ENCODE measurements at regions of chr1 and their contacts with region 1.

Region 1: DNA sequence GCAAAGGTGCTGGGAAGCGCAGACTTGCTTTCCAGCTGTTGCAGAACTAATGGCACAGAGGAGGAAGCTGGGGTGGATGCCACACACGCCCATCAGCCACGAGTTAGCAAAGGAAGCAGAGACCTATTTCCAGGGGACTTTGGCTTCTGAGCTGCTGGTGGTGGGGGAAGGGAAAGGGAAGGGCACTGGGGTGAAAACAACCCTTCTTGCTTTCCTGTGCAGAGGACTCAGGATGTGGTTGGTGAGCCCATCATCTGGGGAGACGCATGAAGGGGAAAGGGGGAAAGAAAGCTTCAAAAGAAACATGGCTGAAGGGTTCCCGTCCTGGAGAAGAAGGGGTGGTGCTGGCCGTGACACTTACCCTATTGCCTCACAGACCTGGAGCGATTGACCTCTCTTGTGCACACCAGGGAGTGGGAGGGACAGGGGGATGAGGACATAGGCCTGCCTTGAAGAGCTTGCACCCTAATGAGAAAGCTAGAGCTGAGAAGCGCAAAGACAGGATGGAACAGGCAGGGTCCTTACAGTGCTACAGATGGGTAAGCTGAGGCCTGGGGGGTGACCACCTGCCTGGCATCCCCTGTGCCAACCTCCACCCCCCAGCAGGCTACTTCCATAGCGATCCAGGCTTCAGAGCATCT is 140.8 kb upstream of the RAB4A start:
- DNase-seq: peak; percentile 88
- ATAC-seq: peak; percentile 80
- H3K4me3 ChIP-seq: peak overlapping the region in 1 of 3 experiments; percentile 30; a peak in 1 of 6 replicates
- H3K27ac ChIP-seq: peak overlapping the region; percentile 100
- H3K4me1 ChIP-seq: peaks cover 82% of the 10 kb centered on the region
- H3K27me3 ChIP-seq: no peaks in the 10 kb centered on the region
- CTCF ChIP-seq: 0 out of 2 replicates have a peak, but pooled peaks have one; percentile 21
- EP300 ChIP-seq: peak; percentile 59 to 76; a peak in 3 of 4 replicates
- POLR2A ChIP-seq: peak; percentile 54 to 69; a peak in 2 of 4 replicates
- RAD21 ChIP-seq: peak; percentile 47; the same call in 1 of the 2 replicates

Region 2: GRCh38 chr1:227895828-227896685 is 1234.1 kb before region 1 on chr1:
- CTCF ChIA-PET with region 1: no interaction called
- POLR2A ChIA-PET with region 1: no interaction called
- in situ Hi-C with region 1: no loop called
- intact Hi-C with region 1: no loop called
- DNase-seq: peak; percentile 71
- ATAC-seq: peak; percentile 81
- H3K4me3 ChIP-seq: peak overlapping the region in 2 of 3 experiments; percentile 0 to 44; a peak in 2 of 6 replicates
- H3K27ac ChIP-seq: no peak overlapping the region
- H3K4me1 ChIP-seq: peaks cover 20% of the 10 kb centered on the region
- H3K27me3 ChIP-seq: peaks cover 4 to 40% of the 10 kb centered on the region in 2 experiments
- CTCF ChIP-seq: peak; percentile 27
- EP300 ChIP-seq: no peak
- POLR2A ChIP-seq: no peak
- RAD21 ChIP-seq: no peak

Region 3: DNA sequence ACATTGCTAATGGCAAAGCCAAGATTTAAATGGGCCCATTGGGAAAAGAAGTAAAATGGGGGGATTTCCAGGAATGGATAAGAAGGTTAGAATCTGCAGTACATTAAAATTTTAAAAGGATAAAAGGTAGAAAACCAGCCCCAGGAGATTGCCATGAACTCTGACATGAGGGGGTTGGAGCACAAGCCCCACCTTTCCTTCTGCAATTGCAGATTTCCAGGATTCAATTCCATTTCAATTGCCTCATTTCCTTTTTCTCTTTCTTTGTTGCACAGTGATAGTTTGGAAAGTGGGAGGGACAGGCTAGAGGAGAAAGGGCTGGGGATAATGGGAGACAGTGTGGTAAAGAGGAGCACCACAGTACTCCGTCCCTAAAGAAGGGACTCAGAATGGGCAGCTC is 97.8 kb before region 1 on chr1:
- CTCF ChIA-PET with region 1: no interaction called
- POLR2A ChIA-PET with region 1: interaction called, 19 read pairs
- in situ Hi-C with region 1: no loop called
- intact Hi-C with region 1: no loop called
- DNase-seq: peak; percentile 57
- ATAC-seq: peak; percentile 17; the same call in 2 of the 3 replicates
- H3K4me3 ChIP-seq: no peak overlapping the region
- H3K27ac ChIP-seq: peak overlapping the region; percentile 79
- H3K4me1 ChIP-seq: peaks cover 82% of the 10 kb centered on the region
- H3K27me3 ChIP-seq: no peaks in the 10 kb centered on the region
- CTCF ChIP-seq: no peak
- EP300 ChIP-seq: no peak
- POLR2A ChIP-seq: no peak
- RAD21 ChIP-seq: no peak

Region 4: GRCh38 chr1:229109320-229109761 is 20.8 kb before region 1 on chr1:
- CTCF ChIA-PET with region 1: no interaction called
- POLR2A ChIA-PET with region 1: interaction called, 21 read pairs
- in situ Hi-C with region 1: no loop called
- intact Hi-C with region 1: no loop called
- DNase-seq: no peak
- ATAC-seq: peak; percentile 13; the same call in 2 of the 3 replicates
- H3K4me3 ChIP-seq: no peak overlapping the region
- H3K27ac ChIP-seq: peak overlapping the region; percentile 68
- H3K4me1 ChIP-seq: peaks cover 100% of the 10 kb centered on the region
- H3K27me3 ChIP-seq: no peaks in the 10 kb centered on the region
- CTCF ChIP-seq: no peak
- EP300 ChIP-seq: no peak
- POLR2A ChIP-seq: no peak
- RAD21 ChIP-seq: no peak

Region 5: DNA sequence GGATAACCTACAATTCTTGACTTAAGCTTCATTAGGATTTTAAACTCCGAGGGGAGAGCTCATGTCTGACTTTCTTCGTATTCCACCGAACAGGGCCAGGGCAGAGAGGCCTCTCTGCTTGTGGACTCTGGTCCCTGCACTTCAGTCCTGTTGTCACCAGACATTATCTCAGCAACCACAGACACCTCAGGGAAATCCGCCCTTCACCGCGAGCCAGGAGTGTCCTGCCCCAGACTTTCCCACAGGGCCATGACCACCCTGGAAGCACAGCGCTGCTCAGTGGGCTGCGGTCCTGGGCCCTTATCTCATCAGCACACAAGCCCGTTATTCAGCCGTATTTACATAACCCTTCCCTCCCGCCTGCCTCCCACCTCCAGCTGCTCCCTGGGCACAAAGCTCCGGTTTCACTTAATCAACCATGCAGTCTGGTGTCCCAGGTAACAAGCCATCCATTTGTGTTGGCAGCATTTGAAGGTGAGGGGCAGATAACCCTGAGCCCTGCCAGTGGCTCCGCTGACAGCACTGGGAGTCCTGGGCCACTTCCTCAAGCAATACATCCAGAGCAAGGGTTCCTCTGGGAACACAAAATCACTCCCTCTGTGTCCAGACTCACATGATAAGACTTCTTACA is 18.0 kb after region 1 on chr1:
- CTCF ChIA-PET with region 1: no interaction called
- POLR2A ChIA-PET with region 1: interaction called, 56 read pairs
- in situ Hi-C with region 1: no loop called
- intact Hi-C with region 1: no loop called
- DNase-seq: peak; percentile 94
- ATAC-seq: peak; percentile 98
- H3K4me3 ChIP-seq: peak overlapping the region in 1 of 3 experiments; percentile 42; a peak in 2 of 6 replicates
- H3K27ac ChIP-seq: peak overlapping the region; percentile 87
- H3K4me1 ChIP-seq: peaks cover 40% of the 10 kb centered on the region
- H3K27me3 ChIP-seq: no peaks in the 10 kb centered on the region
- CTCF ChIP-seq: peak; percentile 65
- EP300 ChIP-seq: peak; percentile 47 to 85; a peak in 3 of 4 replicates
- POLR2A ChIP-seq: peak in 1 of 2 experiments; percentile 53; a peak in 2 of 4 replicates
- RAD21 ChIP-seq: peak; percentile 66

Region 6: DNA sequence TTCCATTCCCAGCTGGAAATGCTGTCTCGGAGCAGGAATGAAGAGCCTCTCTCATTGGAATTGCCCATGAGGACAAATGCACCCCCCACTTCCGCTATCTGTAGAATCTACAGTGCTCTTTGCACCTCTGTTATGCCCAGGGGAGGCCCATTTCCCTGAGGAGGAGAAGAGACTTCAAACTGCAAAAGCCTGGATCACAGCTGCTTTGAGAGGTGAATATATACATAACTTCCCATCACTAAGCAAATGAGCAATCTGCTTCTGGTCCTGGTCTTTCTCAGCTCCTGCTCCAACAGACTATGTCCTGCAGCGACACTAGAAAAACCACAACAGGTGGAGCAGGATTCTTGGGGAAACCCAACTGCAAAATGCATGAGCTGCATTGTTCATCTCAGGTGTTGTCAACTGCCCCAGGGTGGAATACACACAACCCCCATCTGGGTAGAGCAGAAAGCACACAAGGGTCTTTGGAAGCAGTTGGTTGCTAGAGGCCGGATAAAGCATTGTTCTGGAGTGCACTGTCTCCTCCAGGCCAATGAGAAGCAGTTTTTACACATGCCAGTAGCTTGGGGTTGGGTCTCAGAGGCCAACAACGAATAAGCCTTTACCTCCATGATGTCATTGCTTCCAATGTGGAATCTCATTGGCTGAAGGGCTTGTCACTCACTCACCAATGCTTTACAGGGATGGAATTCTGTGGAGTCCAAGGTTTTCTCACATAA is 73.0 kb after region 1 on chr1:
- CTCF ChIA-PET with region 1: no interaction called
- POLR2A ChIA-PET with region 1: interaction called, 17 read pairs
- in situ Hi-C with region 1: no loop called
- intact Hi-C with region 1: no loop called
- DNase-seq: peak; percentile 94
- ATAC-seq: peak; percentile 98
- H3K4me3 ChIP-seq: peak overlapping the region in 1 of 3 experiments; percentile 47; a peak in 2 of 6 replicates
- H3K27ac ChIP-seq: peak overlapping the region; percentile 81
- H3K4me1 ChIP-seq: peaks cover 48% of the 10 kb centered on the region
- H3K27me3 ChIP-seq: no peaks in the 10 kb centered on the region
- CTCF ChIP-seq: no peak
- EP300 ChIP-seq: peak in 1 of 2 experiments; percentile 62; a peak in 2 of 4 replicates
- POLR2A ChIP-seq: peak in 1 of 2 experiments; percentile 50; a peak in 2 of 4 replicates
- RAD21 ChIP-seq: no peak

Region 7: GRCh38 chr1:229221104-229222019 is 91.2 kb after region 1 on chr1:
- CTCF ChIA-PET with region 1: no interaction called
- POLR2A ChIA-PET with region 1: interaction called, 34 read pairs
- in situ Hi-C with region 1: no loop called
- intact Hi-C with region 1: loop called (anchors 1 kb)
- DNase-seq: peak; percentile 98
- ATAC-seq: peak; percentile 85
- H3K4me3 ChIP-seq: peak overlapping the region; percentile 7 to 38 (median 9); a peak in 4 of 6 replicates
- H3K27ac ChIP-seq: peak overlapping the region; percentile 97
- H3K4me1 ChIP-seq: peaks cover 99% of the 10 kb centered on the region
- H3K27me3 ChIP-seq: no peaks in the 10 kb centered on the region
- CTCF ChIP-seq: no peak; the same call in 1 of the 2 replicates
- EP300 ChIP-seq: peak; percentile 64 to 84; a peak in 2 of 4 replicates
- POLR2A ChIP-seq: no peak
- RAD21 ChIP-seq: no peak

Measured in HepG2 (cell line).